ENCODE measurements at regions of chr16 and their contacts with region 1.

Region 1: GRCh38 chr16:71412270-71413160 is 29.3 kb downstream of the TLE7 start:
- DNase-seq: peak; percentile 86
- CTCF ChIP-seq: peak; percentile 77

Region 2: GRCh38 chr16:71499775-71500364 is 87.4 kb after region 1 on chr16:
- in situ Hi-C with region 1: loop called (anchors 10 kb)
- DNase-seq: peak; percentile 66
- CTCF ChIP-seq: peak; percentile 73

Measured in GM13976 (cell line).